Heart right ventricle (tissue), 16 donors: ENCODE measurements at regions of chr4 and their contacts with region 1.

Region 1: GRCh38 chr4:90274175-90274574 is 147.0 kb downstream of the CCSER1 start:
- DNase-seq: no peak
- ATAC-seq: no peak
- H3K4me3 ChIP-seq: no peak overlapping the region
- H3K27ac ChIP-seq: no peak overlapping the region
- H3K4me1 ChIP-seq: no peaks in the 10 kb centered on the region
- H3K27me3 ChIP-seq: no peaks in the 10 kb centered on the region
- CTCF ChIP-seq: no peak

Region 2: DNA sequence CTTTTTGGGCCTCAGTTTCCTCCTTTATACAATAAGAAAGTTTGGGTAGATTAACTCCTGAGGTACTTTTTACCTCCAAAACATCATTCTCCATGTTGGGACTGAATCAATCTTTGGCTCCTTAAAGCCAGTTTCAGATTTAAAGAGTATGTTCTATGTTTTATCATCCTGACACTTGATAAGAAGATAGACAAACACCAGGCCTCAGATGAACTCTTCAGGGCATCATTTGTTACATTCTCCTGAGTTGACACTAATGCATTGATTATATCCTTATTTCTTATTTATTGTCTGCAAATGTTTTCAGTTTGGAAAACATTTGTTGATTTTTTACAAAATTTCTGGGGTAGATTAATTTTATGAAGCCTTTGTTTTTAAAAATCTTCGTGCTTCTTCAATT is 249.7 kb before region 1 on chr4:
- intact Hi-C with region 1: no loop called
- DNase-seq: no peak
- ATAC-seq: no peak
- H3K4me3 ChIP-seq: no peak overlapping the region
- H3K27ac ChIP-seq: no peak overlapping the region
- H3K4me1 ChIP-seq: no peaks in the 10 kb centered on the region
- H3K27me3 ChIP-seq: no peaks in the 10 kb centered on the region
- CTCF ChIP-seq: no peak

Region 3: GRCh38 chr4:91280551-91281290 is 1006.5 kb after region 1 on chr4:
- intact Hi-C with region 1: loop called in 1 of 10 experiments (anchors 5 kb)
- DNase-seq: no peak
- ATAC-seq: peak in 2 of 8 donors; percentile 24 to 34
- H3K4me3 ChIP-seq: no peak overlapping the region
- H3K27ac ChIP-seq: no peak overlapping the region
- H3K4me1 ChIP-seq: peaks cover 0 to 4% (median 0%) of the 10 kb centered on the region in 9 donors
- H3K27me3 ChIP-seq: no peaks in the 10 kb centered on the region
- CTCF ChIP-seq: no peak